ENCODE measurements at regions of chr5 and their contacts with region 1.

Region 1: DNA sequence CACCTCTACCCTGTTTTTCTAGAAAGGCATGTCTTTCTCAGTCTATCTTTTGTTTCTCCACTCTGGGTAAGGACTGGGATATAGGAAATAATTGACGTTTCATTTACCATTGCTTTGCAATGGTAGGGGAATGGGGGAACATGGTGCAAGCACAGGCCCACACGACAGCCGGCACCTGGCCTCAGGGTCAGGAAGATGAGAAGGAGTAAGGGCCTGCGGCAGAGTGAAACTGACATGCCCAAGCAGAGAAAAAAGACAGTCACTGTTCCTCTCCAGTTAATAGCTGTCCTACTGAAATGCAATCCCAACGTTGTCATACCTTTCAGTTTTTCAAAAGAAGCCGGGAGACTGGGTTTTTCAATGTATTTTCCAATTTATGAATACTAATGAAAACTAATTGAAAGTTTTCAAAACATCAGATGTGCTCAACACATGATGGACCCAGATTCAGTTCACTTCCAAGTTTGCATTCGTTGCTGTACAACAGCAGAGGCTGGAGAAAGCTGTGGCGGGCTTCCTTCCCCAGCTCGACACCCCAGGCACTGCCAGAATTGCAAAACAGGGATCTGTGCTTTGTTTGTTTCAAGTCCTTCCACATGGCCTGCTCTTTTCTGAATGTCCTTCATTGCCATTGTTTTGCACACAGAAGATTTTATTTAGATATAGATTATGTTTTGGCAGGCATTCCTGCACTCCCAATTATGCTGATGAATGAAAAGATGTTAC is 30.1 kb upstream of the INSYN2B start:
- DNase-seq: no peak
- H3K4me3 ChIP-seq: no peak overlapping the region
- CTCF ChIP-seq: no peak

Region 2: GRCh38 chr5:169934990-169935389 is 75.4 kb before region 1 on chr5:
- in situ Hi-C with region 1: no loop called
- DNase-seq: no peak
- H3K4me3 ChIP-seq: no peak overlapping the region
- CTCF ChIP-seq: no peak

Region 3: DNA sequence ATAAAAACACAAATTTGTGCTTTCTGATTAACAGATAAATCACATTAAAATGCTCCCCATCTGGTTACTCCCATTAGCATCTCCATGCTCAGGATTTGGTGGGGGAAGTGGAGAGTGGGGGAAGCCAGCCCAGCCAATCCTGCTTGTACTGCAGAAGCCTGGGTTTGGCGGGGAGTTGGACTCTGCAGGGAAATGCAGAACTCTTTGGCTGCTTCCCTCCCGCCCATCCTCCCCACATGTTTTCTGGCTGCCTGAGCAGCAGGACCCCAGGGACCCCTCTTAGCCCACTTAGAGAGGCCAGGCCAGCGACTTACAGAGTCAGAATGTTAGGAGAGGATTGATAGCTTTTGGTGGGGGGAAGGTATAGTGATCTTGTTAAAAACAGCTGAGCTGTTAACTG is 35.8 kb after region 1 on chr5:
- in situ Hi-C with region 1: no loop called
- DNase-seq: no peak
- H3K4me3 ChIP-seq: no peak overlapping the region
- CTCF ChIP-seq: no peak

Region 4: DNA sequence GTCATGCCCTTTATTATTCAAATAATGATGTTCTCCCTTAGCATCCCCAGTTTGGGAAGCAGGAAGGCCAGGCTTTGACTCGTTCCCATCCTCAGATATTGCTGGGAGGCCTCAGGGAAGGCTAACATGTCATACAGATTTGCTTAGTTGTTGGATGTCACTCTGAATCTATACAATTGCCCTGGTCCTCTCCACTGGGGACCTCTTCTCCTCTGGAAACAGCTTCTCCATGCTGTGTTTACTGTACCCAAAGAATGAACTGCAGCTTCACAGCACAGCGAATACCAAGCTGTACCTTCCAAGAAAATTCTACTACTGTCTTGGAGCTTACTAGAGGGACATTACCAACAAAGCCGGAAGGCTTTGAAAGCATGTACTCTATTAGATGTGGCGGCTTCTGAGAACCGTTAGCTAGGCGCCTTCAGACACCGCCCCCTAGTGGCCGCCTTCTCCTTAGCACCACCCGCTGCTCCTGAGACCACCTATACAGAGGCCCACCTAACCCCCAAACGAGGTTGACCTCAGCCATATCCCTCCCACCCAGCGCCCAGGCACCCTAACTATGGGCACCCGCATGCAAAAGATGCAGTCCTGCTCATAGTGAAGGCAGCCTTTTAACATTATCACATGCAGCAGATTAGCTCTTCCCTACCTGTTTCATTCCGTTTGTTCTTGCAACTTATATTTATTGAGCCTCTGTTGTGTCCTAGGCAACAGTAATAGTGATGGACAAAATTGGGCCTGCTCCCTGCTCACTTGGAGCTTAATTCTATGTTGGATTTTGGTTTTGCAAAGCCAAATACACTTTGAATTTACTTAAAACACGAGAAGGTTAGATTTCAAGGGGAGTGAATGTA is 60.4 kb after region 1 on chr5:
- in situ Hi-C with region 1: loop called (anchors 10 kb)
- DNase-seq: peak; percentile 1
- H3K4me3 ChIP-seq: no peak overlapping the region
- CTCF ChIP-seq: peak; percentile 61